MCF 10A (cell line): ENCODE measurements at regions of chr6 and their contacts with region 1.

Region 1: GRCh38 chr6:36678518-36679027 is at the start of gene CDKN1A:
- DNase-seq: peak; percentile 90
- H3K4me3 Mint-ChIP-seq: peak within 1 kb of the TSS; percentile 87
- H3K27ac Mint-ChIP-seq: peak within 1 kb of the TSS; percentile 97
- H3K4me1 Mint-ChIP-seq: peaks cover 29% of the 10 kb centered on the region
- H3K27me3 Mint-ChIP-seq: no peaks in the 10 kb centered on the region
- CTCF ChIP-seq: no peak
- total RNA-seq, gene CDKN1A: 407 and 489 TPM in 2 replicates

Region 2: GRCh38 chr6:36546920-36547645 is 131.5 kb before region 1 on chr6 and contains the start of gene STK38:
- CTCF ChIA-PET with region 1: no interaction called
- POLR2A ChIA-PET with region 1: no interaction called
- intact Hi-C with region 1: loop called (anchors 5 kb)
- DNase-seq: peak; percentile 91
- H3K4me3 Mint-ChIP-seq: peak within 1 kb of the TSS; percentile 91
- H3K27ac Mint-ChIP-seq: peak within 1 kb of the TSS; percentile 93
- H3K4me1 Mint-ChIP-seq: peaks cover 12% of the 10 kb centered on the region
- H3K27me3 Mint-ChIP-seq: no peaks in the 10 kb centered on the region
- CTCF ChIP-seq: peak; percentile 20
- total RNA-seq, gene STK38: 16.8 and 20.0 TPM in 2 replicates

Region 3: DNA sequence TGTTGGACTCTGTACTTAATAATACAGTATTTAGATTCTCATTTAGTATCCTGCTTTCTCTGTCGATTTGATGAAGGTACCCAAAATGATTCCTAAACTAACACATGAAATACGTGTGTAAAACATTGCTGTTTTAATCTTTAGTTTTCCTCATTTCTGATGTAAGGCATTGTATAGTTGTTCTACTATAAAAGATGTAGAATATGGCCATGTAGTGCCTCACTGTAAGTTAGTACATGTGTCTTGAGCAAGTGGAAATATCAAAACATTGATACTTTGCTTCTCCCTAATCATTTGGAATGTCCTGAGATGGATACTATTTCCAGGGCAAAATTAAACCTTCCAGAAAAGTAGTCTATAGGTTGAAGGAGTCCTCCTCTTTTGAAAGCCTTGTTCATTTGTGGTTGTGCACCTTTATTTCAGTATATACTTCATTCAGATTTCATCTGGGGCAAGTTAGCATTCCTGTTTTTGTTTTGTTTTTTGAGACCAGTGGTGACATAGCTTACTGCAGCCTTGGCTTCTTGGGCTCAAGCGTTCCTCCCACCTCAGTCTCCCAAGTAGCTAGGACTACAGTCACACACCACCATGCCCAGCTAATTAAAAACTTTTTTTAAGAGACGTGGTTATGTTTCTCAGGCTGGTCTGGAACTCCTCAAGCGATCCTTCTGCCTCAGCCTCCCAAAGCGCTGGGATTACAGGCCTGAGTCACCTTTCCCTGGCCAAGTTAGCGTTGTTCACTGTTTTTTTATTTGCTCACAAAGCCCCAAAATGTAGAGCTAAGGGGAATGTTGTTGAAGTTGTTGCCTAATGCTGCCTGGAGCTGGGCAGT is 72.8 kb before region 1 on chr6:
- CTCF ChIA-PET with region 1: interaction called, 4 read pairs
- POLR2A ChIA-PET with region 1: interaction called, 211 read pairs
- intact Hi-C with region 1: no loop called
- DNase-seq: no peak
- H3K4me3 Mint-ChIP-seq: no peak overlapping the region
- H3K27ac Mint-ChIP-seq: no peak overlapping the region
- H3K4me1 Mint-ChIP-seq: peaks cover 32% of the 10 kb centered on the region
- H3K27me3 Mint-ChIP-seq: no peaks in the 10 kb centered on the region
- CTCF ChIP-seq: no peak

Region 4: DNA sequence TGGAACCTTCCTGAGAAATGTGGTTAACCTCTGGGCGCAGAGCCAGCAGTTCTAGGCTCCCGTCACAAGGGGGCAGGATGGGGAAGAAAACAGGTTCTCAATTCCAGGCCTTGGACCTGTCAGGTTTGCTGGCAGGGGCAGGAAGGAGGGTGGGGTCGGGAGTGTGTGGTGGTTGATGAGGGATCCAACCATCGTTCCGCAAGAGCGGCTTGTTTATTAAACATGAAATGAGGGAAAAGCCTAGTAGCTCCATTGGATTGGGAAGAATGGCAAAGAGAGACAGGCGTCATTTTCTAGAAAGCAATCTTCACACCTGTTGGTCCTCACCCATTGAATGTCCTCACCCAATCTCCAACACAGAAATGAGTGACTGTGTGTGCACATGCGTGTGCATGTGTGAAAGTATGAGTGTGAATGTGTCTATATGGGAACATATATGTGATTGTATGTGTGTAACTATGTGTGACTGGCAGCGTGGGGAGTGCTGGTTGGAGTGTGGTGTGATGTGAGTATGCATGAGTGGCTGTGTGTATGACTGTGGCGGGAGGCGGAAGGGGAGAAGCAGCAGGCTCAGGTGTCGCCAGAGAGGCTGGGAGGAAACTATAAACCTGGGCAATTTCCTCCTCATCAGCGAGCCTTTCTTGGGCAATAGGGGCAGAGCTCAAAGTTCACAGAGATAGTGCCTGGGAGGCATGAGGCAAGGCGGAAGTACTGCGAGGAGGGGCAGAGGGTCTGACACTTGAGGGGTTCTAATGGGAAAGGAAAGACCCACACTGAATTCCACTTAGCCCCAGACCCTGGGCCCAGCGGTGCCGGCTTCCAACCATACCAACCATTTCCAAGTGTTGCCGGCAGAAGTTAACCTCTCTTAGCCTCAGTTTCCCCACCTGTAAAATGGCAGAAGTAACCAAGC is 54.8 kb before region 1 on chr6:
- CTCF ChIA-PET with region 1: interaction called, 20 read pairs
- POLR2A ChIA-PET with region 1: interaction called, 99 read pairs
- intact Hi-C with region 1: loop called (anchors 1 kb)
- DNase-seq: peak; percentile 88
- H3K4me3 Mint-ChIP-seq: no peak overlapping the region
- H3K27ac Mint-ChIP-seq: no peak overlapping the region
- H3K4me1 Mint-ChIP-seq: peaks cover 25% of the 10 kb centered on the region
- H3K27me3 Mint-ChIP-seq: no peaks in the 10 kb centered on the region
- CTCF ChIP-seq: peak; percentile 89

Region 5: DNA sequence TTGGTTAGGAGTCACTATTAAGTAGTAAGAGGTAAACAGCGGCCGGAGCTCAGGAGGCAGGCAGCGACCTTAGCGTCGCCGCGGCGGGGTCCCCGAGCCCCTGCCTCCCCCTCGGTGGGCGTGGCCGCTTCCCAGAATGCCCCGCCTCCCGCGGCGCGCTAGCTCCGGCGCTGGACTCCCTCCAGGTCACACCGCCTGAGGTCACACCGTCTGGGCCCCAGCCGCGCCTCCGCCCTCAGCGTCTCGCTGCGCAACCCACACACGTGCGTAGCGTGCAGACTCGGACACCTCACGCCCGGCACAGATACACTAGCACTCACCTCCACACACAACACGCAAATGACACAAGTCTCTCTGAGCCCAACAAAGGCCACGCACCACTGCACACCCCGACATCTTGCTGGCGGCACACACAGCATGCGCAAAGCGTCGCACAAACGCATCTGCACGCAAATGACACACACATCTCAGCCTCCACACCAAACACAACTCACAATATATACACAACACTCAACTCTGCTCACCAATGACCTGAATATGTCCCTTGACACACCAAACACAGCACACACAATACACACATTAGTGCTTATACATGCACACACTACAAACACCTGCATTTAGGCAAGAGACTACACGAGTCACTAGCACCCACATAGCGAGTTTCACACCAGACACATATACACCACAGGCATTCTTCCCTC is 17.7 kb before region 1 on chr6:
- CTCF ChIA-PET with region 1: interaction called, 37 read pairs
- POLR2A ChIA-PET with region 1: interaction called, 495 read pairs
- intact Hi-C with region 1: no loop called
- DNase-seq: no peak
- H3K4me3 Mint-ChIP-seq: no peak overlapping the region
- H3K27ac Mint-ChIP-seq: no peak overlapping the region
- H3K4me1 Mint-ChIP-seq: peaks cover 28% of the 10 kb centered on the region
- H3K27me3 Mint-ChIP-seq: no peaks in the 10 kb centered on the region
- CTCF ChIP-seq: no peak

Region 6: GRCh38 chr6:36759148-36759759 is 80.7 kb after region 1 on chr6:
- CTCF ChIA-PET with region 1: interaction called, 5 read pairs
- POLR2A ChIA-PET with region 1: interaction called, 4 read pairs
- intact Hi-C with region 1: loop called (anchors 2 kb)
- DNase-seq: peak; percentile 70
- H3K4me3 Mint-ChIP-seq: no peak overlapping the region
- H3K27ac Mint-ChIP-seq: no peak overlapping the region
- H3K4me1 Mint-ChIP-seq: peaks cover 11% of the 10 kb centered on the region
- H3K27me3 Mint-ChIP-seq: no peaks in the 10 kb centered on the region
- CTCF ChIP-seq: peak; percentile 97